ENCODE measurements at regions of chr5 and their contacts with region 1.

Region 1: GRCh38 chr5:159316519-159317383 is 13.5 kb downstream of the IL12B start:
- DNase-seq: peak; percentile 53
- CTCF ChIP-seq: peak; percentile 67

Region 2: GRCh38 chr5:159214486-159215271 is 102.1 kb before region 1 on chr5:
- CTCF ChIA-PET with region 1: interaction called, 10 read pairs
- POLR2A ChIA-PET with region 1: no interaction called
- DNase-seq: no peak
- CTCF ChIP-seq: no peak

Region 3: DNA sequence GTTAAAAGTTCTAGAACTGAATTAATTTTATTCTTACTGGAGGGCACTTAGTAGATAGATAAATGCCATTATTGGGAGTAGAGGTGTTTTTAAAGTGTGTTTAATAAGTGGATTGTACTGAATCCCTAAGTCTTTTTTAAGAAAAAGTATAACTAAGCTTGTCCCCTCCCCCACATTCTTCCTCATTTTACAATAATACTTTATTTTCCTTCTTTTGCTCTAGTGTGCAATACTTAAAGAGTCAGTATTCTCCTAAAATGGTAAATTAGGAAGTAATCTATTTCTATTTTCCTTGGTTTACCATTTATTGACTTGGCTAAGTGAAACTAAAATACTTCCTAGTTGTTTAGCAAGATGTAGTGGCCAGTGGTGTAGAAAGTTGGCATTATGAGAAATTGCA is 42.1 kb before region 1 on chr5:
- CTCF ChIA-PET with region 1: interaction called, 10 read pairs
- POLR2A ChIA-PET with region 1: no interaction called
- DNase-seq: no peak
- CTCF ChIP-seq: no peak

Region 4: GRCh38 chr5:159286420-159287035 is 30.2 kb before region 1 on chr5:
- CTCF ChIA-PET with region 1: interaction called, 30 read pairs
- POLR2A ChIA-PET with region 1: no interaction called
- DNase-seq: no peak
- CTCF ChIP-seq: peak; percentile 44

Region 5: DNA sequence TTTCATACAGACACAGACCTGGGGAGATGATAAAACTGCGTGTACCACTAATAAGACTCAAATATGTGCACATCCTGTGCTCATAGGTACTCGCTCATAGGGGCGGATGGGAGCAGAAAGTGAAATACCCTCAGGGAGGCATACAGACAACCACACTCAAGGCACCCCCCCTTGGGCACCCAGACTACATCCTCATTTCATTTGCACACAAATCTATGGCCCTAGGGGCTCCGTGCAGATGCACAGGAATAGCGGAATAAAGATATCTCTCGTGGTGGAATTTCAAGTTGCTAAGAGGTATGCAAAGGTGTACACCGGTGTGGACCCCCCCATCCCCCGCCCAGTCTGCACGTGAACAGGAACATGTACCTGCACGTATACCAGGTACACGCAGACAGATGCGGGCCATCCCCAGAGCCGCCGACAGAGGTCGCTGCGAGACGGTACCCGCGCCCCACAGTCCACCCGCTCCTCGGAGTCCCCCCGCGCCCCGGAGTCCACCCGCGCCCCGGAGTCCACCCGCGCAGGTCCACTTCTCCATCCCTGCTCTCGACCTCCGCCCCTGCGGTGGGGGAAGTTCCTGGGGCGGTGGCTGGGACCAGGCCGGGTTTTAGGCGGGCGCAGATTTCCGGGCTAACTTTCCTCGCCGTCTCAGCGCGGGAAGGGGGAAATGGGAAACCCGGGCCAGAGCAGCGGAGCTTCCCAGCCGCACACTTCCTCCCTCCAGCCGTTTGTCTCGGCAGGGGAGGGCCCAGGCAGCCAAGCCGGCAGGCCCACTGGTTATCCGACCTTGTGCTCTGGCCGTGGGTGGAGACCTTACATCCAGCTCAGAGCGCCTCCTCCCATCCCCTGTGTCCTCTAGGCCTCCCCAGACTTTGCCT is 14.6 kb after region 1 on chr5:
- CTCF ChIA-PET with region 1: interaction called, 13 read pairs
- POLR2A ChIA-PET with region 1: no interaction called
- DNase-seq: peak; percentile 77
- CTCF ChIP-seq: peak; percentile 72

Region 6: DNA sequence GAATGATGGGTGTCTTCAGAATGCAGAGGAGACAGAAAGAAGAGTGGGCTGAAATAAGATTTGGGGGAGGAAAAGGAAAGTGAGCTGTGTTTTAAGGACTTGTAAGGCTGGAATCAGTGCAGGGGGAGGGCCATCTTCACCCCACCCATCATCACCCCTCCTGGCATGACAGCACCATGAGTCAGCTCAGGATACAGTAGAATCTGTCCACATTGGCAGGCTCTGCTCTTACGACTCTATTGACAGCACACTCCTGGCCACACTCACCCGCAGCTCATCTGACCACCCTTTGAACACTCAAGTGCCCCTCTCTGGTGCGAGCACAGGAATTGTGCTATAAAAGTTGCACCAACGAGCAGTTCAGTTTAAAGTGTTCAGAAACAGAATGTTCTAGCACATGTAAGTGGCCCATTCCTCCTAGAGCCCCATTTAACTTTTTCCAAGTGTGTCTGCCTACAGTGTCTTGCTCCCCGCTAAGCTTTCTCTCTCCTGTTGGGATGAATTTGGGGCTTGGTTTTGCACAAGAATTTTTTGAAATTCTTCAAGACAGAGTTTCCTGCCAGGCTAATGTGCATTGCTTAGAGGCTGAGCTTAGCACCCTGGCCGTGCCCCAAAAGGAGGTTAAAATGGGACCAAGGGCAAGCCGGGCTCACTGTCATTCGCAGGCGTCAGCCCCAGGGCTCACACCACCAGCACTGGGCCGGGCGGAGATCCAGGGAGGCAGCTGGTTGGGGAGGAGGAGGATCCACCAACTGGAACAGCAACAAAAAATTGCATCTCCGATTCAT is 611.6 kb after region 1 on chr5:
- CTCF ChIA-PET with region 1: no interaction called
- POLR2A ChIA-PET with region 1: no interaction called
- DNase-seq: no peak
- CTCF ChIP-seq: no peak

Measured in GM10248 (cell line).